Psoas muscle (tissue), 8 donors: ENCODE measurements at regions of chr1 and their contacts with region 1.

Region 1: DNA sequence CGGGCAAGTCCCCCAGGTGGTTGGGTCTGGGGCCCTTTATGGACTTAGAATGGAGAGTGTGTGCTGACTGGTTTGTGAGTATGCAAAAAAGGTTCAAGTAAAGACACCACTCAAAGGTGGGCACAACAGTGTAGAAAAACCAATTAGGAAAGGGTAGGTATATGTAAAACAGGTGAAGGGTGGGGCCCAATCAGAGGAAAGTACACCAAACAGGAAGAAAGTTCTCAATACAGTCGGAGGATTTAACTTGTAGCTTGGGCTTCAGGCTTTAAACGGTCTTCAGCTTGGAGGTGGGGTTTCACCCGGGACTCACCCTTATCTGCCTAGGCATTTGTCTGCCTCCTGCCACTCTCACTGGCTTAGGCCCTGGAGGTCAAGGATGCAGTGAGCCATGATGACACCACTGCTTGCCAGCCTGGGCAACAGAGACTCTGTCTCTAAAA is 6.8 kb upstream of the PUM1 start:
- DNase-seq: no peak
- ATAC-seq: no peak
- H3K4me3 ChIP-seq: no peak overlapping the region
- H3K27ac ChIP-seq: no peak overlapping the region
- H3K4me1 ChIP-seq: no peaks in the 10 kb centered on the region
- H3K27me3 ChIP-seq: no peaks in the 10 kb centered on the region
- CTCF ChIP-seq: no peak

Region 2: DNA sequence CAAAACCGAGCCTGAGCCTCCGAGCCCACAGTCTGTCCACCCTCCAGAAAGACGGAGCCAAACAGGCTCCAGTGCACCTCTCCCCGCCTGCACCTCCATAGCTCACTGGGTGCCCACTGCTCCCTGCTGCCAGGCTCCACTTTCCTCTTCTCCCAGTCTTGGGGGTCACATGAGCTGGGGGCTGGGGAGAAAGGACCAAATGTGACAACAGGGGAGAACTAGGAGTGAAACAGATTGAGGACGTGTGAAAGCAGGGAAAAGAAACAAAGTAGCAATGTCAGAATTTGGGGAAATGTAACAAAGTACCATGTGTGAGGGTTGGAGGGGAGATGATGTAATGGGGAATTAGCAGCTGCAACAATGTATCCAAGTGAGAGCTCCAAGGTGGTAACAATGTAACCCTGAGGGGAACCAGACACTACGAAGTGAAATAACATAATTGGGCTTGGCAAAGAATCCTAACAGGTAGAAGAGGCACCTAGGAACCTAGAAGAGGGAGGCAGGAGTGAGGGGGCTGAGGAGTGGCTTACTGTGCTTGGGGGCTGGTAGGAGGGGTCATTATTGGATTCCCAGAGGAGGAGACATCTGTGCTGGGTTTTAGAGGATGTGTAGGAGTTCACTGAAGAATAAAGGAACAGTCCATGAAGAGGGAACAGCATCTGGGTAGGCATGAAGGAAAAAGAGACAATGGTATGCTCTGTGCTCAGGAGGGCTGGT is 176.2 kb before region 1 on chr1:
- intact Hi-C with region 1: no loop called
- DNase-seq: no peak
- ATAC-seq: no peak
- H3K4me3 ChIP-seq: no peak overlapping the region
- H3K27ac ChIP-seq: no peak overlapping the region
- H3K4me1 ChIP-seq: no peaks in the 10 kb centered on the region
- H3K27me3 ChIP-seq: no peaks in the 10 kb centered on the region
- CTCF ChIP-seq: no peak

Region 3: GRCh38 chr1:31036749-31037500 is 35.4 kb before region 1 on chr1:
- intact Hi-C with region 1: no loop called
- DNase-seq: no peak
- ATAC-seq: no peak
- H3K4me3 ChIP-seq: no peak overlapping the region
- H3K27ac ChIP-seq: no peak overlapping the region
- H3K4me1 ChIP-seq: peaks cover 68% of the 10 kb centered on the region
- H3K27me3 ChIP-seq: no peaks in the 10 kb centered on the region
- CTCF ChIP-seq: no peak

Region 4: DNA sequence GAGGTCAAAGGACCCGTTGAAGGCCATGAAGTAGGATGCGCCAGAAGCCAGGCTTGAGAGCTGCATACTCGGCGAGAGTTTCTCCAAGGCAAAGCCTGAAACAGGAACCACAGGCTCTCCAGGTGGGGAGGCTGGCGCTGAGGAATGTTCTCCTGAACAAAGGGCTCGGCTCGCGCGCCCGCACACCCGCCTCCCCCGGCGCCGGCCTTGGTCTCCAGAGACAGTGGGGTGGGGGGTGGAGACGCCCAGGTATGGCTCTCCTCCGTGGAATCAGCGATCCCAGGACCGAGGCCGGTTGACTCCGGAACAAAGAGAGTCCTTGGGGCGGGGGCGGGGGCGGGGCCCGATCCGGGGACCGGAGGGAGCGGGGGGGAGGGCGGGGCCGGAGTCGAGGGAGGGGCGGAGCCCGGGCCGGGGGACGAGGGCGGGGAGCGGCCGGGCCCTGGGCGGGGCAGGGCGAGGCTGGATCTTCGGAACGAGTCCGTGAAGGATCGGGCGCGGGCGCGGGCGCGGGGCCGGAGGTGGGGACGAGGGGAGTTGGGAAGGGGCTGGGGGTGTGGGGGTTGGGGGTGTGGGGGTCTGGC is 82.4 kb after region 1 on chr1:
- intact Hi-C with region 1: loop called in 1 of 2 experiments (anchors 5 kb)
- DNase-seq: peak; percentile 79 to 87
- ATAC-seq: peak; percentile 89 to 95 (median 92)
- H3K4me3 ChIP-seq: peak overlapping the region; percentile 82
- H3K27ac ChIP-seq: peak overlapping the region; percentile 87
- H3K4me1 ChIP-seq: no peaks in the 10 kb centered on the region
- H3K27me3 ChIP-seq: no peaks in the 10 kb centered on the region
- CTCF ChIP-seq: no peak